ENCODE measurements at regions of chr3 and their contacts with region 1.

Region 1: DNA sequence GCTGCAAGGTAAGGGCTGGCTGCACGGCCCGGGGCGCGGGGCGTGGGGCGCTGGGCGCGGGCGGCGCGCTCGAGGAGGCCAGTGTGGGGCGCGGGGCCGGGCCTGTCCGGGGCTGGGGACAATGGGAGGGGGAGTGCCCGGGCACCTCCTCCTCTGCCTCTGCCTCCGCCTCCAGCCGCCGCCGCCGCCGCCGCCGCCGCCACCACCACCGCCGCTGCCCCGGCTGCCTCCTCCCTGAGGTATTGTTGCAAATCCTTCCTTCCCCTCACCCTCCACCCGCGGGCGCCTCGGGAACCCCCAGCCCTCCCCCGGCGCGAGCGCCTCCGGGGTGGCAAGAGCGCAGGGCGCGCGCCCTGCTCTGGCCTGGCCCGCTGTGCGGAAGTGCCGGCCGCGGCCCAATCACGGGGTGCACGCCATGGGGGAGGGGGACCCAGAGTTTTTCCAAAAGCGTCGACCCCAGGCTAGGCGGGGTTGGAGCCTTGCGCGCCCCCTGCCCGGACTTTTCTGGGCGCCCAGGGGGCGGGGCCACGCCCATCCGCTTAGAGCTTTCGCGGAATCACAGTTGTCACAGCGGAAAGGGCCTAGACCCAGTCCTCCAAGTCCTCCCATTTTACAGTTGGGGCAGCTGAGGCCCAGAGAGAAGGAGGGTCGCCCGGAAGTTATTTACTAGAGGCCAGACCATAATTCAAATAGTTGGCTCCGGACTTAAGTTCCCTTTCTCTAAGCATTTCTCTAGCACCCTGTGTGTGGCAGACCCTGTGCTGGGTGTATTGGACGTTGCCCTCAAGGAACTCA is at the start of gene LPP:
- DNase-seq: peak; percentile 96
- total RNA-seq, gene LPP: 145 TPM

Region 2: DNA sequence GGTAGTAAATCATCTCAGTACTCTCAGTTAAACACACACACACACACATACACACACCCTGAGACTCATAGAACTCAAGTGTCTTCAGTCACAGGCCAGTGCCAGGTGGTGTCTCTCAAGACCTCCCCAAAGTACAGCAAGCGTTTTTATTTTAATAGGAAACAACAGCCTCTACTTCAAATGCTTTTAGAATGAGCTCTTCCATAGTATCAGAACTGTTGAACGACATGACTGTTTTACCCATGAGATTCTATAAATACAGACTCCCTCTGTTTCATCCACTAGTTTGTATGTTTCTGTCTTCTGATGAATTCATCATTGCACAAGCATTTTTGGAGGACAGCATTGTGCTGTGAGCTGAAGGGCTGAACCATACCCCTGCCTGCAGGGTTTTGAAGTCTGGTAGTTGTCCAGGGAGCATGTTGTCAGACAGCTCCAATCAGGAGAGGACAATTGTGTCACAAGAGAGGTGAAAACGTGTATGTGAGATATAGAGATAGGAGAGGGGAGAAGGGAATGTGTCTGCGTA is 208.0 kb before region 1 on chr3:
- intact Hi-C with region 1: loop called (anchors 5 kb)
- DNase-seq: no peak

Region 3: DNA sequence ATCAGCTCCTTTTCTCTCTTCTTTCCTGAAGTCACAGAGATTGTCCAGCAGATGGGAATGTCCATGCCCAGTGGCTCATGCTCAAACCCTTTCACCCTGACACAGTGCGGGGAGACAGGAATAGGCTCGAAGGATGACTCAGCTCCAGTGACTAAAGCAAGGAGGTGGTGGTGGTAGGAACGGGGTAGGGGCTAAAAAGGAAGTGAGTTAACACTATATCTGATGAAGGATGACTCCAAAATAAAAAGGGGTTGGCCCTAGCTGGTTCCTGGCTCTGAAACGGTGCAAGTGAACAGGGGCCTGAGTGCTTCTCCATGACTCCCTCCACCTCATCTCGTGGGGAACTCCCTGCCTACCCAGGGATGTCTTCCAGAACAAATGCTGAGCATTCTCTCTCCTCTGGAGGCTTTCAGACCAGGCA is 167.7 kb before region 1 on chr3:
- intact Hi-C with region 1: loop called (anchors 10 kb)
- DNase-seq: no peak

Region 4: GRCh38 chr3:188262913-188263683 is 108.9 kb after region 1 on chr3:
- intact Hi-C with region 1: loop called (anchors 2 kb)
- DNase-seq: no peak

Region 5: DNA sequence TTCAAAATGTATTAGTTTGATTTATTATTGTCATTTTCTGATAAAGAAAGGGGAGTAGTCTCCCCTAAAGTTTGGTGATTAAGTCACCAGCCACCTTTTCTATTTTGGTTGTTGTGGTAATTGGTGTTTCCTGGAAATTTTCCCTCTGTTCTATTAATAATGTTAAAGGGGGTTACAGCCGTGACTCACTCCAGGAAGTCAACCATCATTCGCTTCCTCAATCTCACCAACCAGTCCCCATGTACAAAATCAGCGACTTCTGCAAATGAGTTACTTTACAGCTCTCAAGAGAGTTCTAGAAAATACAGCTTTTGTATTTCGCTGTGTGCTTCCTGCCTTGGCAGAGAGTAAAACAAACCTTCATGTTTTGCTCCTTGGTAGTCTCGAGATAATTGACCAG is 284.9 kb after region 1 on chr3:
- intact Hi-C with region 1: loop called (anchors 5 kb)
- DNase-seq: no peak

Region 6: GRCh38 chr3:188664795-188665194 is 510.6 kb after region 1 on chr3:
- intact Hi-C with region 1: no loop called
- DNase-seq: no peak